ENCODE measurements at regions of chr9 and their contacts with region 1.

Region 1: DNA sequence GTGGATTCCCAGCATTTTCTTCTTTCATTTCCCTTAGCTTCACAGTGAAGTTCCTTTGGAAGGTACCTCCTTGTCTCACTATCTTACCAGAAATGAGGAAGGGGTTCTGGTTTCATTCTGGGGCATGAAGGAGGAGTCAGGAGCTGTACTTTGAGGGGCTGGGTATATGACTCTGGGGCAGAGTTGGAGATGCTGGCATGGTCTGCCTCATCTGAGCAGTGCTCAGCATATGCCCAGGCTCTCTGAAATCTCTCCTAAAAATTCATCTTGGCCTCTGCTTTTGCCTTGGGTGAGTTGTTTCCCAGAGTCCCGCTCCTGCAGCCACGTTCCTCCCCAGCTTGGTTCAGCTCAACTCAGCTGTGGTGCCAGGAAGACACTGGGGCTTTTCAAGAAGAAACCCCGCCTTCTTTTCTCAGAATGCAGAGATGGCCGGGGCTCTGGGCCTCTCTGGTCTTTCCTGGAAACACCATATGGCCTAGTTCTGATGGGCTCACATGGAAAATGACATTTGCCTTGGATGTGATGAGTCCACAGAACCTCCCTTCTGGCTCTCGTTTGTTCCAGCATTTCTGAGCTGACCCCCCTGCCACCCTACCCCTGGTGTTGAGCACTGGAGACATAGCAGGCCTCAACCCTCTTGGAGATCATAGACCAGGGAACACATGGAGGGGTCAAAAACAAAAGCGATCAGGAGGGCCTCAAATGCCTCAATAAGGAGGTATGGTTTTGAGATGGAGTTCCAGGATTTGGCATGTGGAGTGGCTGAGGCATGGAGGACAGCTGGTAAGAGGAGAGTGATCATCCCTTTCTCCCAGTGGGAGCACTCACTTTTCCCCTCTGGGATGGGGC is 12.0 kb upstream of the TGFBR1 start:
- DNase-seq: peak; percentile 82
- ATAC-seq: peak; percentile 81
- H3K4me3 Mint-ChIP-seq: peak overlapping the region; percentile 45
- H3K27ac Mint-ChIP-seq: peak overlapping the region; percentile 95
- H3K4me1 Mint-ChIP-seq: peaks cover 31% of the 10 kb centered on the region
- H3K27me3 Mint-ChIP-seq: no peaks in the 10 kb centered on the region
- CTCF ChIP-seq: no peak

Region 2: GRCh38 chr9:99040911-99041582 is 51.8 kb before region 1 on chr9:
- CTCF ChIA-PET with region 1: no interaction called
- POLR2A ChIA-PET with region 1: no interaction called
- intact Hi-C with region 1: no loop called
- DNase-seq: no peak
- ATAC-seq: peak; percentile 55
- H3K4me3 Mint-ChIP-seq: no peak overlapping the region
- H3K27ac Mint-ChIP-seq: no peak overlapping the region
- H3K4me1 Mint-ChIP-seq: peaks cover 23% of the 10 kb centered on the region
- H3K27me3 Mint-ChIP-seq: no peaks in the 10 kb centered on the region
- CTCF ChIP-seq: no peak

Region 3: DNA sequence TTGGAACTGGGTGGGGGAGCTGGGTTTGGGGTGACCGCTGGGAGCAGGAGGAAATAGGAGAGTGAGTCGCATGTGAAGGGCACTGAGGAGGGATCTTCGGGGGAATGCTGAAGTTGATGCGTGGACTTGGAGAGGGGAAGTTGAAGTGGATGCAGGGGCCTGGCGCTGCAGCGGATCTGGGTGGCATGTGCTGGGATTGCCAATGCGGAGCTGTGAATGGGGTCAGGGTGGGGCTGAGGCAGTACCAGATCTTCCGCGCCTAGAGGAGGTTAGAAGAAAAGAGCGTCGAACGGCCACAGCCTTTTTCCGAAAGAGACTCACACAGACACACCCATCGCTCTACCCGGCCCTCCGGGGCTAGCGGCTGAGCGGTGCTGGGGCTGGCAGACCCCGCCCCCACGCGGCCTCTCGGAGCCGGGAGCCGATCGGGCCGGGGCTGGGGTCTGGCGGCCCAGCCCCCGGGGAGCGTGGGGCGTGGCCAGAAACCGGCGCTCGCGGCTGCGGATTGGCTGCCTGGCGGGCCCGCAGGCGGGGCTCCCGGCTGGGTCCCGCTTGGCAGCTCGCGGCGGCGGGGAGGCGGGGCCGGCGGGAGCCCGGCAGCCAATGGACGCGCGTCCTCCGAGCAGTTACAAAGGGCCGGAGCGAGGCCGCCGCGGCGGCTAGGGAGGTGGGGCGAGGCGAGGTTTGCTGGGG is 11.7 kb after region 1 on chr9 and contains the start of gene TGFBR1:
- CTCF ChIA-PET with region 1: interaction called, 7 read pairs
- POLR2A ChIA-PET with region 1: interaction called, 20 read pairs
- intact Hi-C with region 1: no loop called
- DNase-seq: peak; percentile 92
- ATAC-seq: peak; percentile 87
- H3K4me3 Mint-ChIP-seq: peak within 1 kb of the TSS; percentile 78
- H3K27ac Mint-ChIP-seq: peak within 1 kb of the TSS; percentile 86
- H3K4me1 Mint-ChIP-seq: peaks cover 47% of the 10 kb centered on the region
- H3K27me3 Mint-ChIP-seq: no peaks in the 10 kb centered on the region
- CTCF ChIP-seq: no peak
- total RNA-seq, gene TGFBR1: 34.3 to 36.5 TPM

Region 4: GRCh38 chr9:99211741-99212140 is 118.9 kb after region 1 on chr9:
- CTCF ChIA-PET with region 1: no interaction called
- POLR2A ChIA-PET with region 1: no interaction called
- intact Hi-C with region 1: no loop called
- DNase-seq: no peak
- ATAC-seq: peak; percentile 39
- H3K4me3 Mint-ChIP-seq: no peak overlapping the region
- H3K27ac Mint-ChIP-seq: no peak overlapping the region
- H3K4me1 Mint-ChIP-seq: peaks cover under 1% of the 10 kb centered on the region
- H3K27me3 Mint-ChIP-seq: peaks cover 3% of the 10 kb centered on the region
- CTCF ChIP-seq: no peak

Measured in activated CD8-positive, alpha-beta T cell treated with anti-CD3 and anti-CD28 coated beads for 36 hours (primary cell).